Activated T-helper 2 cell treated with anti-CD3 and anti-CD28 coated beads, Interferon-gamma antibody, Interleukin-2, Interleukin-4, amounts not matched to agents 10 μg/mL and 5 μg/mL and 100 μg/mL, durations not matched to agents 14 hours and 24 hours and 36 hours (primary cell): ENCODE measurements at regions of chr6 and their contacts with region 1.

Region 1: DNA sequence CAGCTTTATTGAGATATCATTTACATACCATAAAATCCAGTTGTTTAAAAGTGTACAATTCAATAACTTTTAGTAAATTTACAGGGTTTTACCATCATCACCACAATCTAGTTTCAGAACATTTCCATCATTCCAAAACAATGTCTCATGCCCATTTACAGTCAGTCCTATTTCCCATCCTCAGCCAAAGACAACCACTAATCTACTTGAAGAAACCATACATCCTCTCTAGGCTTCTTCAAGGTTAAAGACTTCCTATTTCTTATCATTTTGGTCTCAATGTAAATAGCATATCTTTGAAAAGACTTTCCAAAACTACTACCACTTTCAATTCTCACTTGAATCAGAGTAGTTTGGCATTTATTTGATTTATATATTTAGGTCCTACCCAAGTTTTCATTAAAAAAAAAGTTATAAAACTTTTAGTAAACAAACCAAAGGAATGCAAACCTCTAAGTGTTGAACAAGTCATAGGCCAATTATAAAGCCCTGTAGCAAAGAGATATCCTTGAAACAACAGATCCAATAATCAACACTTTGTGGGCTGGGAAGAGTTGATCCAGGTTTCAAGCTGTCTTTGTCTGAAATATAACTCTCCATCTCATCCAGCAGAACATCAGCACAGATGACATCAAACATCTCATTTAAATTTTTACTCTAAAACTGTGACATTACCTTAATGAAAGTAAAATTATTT is 211.3 kb upstream of the RUNX2 start:
- DNase-seq: no peak
- H3K4me3 Mint-ChIP-seq: no peak overlapping the region
- H3K27ac Mint-ChIP-seq: peak overlapping the region; percentile 34
- H3K4me1 Mint-ChIP-seq: peaks cover 27% of the 10 kb centered on the region
- H3K27me3 Mint-ChIP-seq: no peaks in the 10 kb centered on the region

Region 2: GRCh38 chr6:44787254-44787834 is 329.5 kb before region 1 on chr6:
- intact Hi-C with region 1: loop called (anchors 2 kb)
- DNase-seq: no peak
- H3K4me3 Mint-ChIP-seq: peak overlapping the region; percentile 15
- H3K27ac Mint-ChIP-seq: peak overlapping the region; percentile 48
- H3K4me1 Mint-ChIP-seq: peaks cover 13% of the 10 kb centered on the region
- H3K27me3 Mint-ChIP-seq: no peaks in the 10 kb centered on the region

Region 3: GRCh38 chr6:45163952-45164766 is 47.3 kb after region 1 on chr6:
- intact Hi-C with region 1: loop called (anchors 1 kb)
- DNase-seq: no peak
- H3K4me3 Mint-ChIP-seq: no peak overlapping the region
- H3K27ac Mint-ChIP-seq: peak overlapping the region; percentile 81
- H3K4me1 Mint-ChIP-seq: peaks cover 46% of the 10 kb centered on the region
- H3K27me3 Mint-ChIP-seq: no peaks in the 10 kb centered on the region